SK-N-SH (cell line): ENCODE measurements at regions of chr2 and their contacts with region 1.

Region 1: DNA sequence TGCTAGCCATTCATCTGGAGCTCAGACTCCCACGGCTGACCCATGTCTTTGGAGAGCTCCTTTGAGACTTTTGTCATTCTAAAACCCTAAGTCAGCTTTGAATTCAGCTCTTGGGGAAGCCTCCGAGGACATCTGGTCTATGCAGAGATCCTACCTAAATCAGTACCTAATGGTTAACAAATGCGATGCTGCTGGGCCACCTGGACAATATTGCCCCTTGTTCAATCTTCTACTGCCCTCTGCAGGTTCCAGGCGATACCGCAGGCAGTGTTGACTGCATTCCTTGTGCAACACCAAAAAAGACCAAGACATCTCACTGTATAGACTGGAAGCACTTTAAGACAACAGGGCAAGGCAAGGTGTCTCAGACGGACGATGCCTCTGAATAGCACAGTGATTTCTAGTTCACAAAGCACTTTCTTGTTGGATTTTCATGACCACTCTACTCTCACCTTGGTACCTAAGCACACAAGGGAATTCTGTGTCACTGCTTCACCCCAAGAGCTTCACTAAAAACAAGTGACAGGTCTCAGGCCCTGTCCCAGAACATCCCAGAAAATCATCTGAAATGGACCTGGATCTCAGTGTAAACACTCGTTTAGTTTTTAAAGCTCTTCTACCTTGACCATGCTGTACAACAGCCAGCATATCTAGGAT is 80.9 kb downstream of the XDH start:
- DNase-seq: peak; percentile 82
- H3K4me3 ChIP-seq: no peak overlapping the region; a peak in 1 of 4 replicates
- H3K27ac ChIP-seq: peak overlapping the region in 1 of 2 experiments; percentile 43; a peak in 2 of 4 replicates
- H3K4me1 ChIP-seq: peaks cover 25 to 42% of the 10 kb centered on the region in 2 experiments; a peak in 3 of 4 replicates
- H3K27me3 ChIP-seq: no peaks in the 10 kb centered on the region
- CTCF ChIP-seq: peak; percentile 100
- EP300 ChIP-seq: peak in 1 of 2 experiments; percentile 50; a peak in 2 of 4 replicates
- RAD21 ChIP-seq: peak; percentile 100

Region 2: GRCh38 chr2:30862054-30862651 is 471.5 kb before region 1 on chr2:
- CTCF ChIA-PET with region 1: interaction called, 73 read pairs
- POLR2A ChIA-PET with region 1: no interaction called
- DNase-seq: peak; percentile 83
- H3K4me3 ChIP-seq: peak overlapping the region in 1 of 2 experiments; percentile 43; a peak in 1 of 4 replicates
- H3K27ac ChIP-seq: peak overlapping the region in 1 of 2 experiments; percentile 62; a peak in 2 of 4 replicates
- H3K4me1 ChIP-seq: peaks cover 0 to 30% of the 10 kb centered on the region in 2 experiments; a peak in 2 of 4 replicates
- H3K27me3 ChIP-seq: no peaks in the 10 kb centered on the region
- CTCF ChIP-seq: peak; percentile 65
- EP300 ChIP-seq: no peak
- RAD21 ChIP-seq: peak; percentile 87

Region 3: DNA sequence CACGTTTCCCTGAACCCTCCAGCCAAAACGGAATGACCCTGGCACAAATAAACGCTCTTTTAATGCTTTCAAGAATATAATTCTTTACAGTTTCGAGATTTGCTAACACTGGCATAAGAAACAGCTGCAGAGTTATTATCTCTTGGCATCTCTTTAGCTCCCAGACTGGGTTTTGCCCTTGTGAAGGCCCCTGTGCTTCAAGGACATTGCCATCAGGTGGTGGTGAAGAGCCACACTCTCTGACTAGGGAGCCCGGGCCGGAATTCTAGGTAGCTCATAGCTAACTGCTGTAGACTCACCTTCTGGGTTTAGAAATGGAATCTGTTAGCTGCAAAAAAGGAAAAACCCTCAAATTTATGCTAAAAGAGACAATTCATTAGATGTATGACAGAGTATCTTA is 182.2 kb before region 1 on chr2:
- CTCF ChIA-PET with region 1: interaction called, 28 read pairs
- POLR2A ChIA-PET with region 1: no interaction called
- DNase-seq: peak; percentile 40
- H3K4me3 ChIP-seq: no peak overlapping the region
- H3K27ac ChIP-seq: no peak overlapping the region
- H3K4me1 ChIP-seq: no peaks in the 10 kb centered on the region
- H3K27me3 ChIP-seq: 0 out of 2 replicates have a peak, but pooled peaks cover 5% of the 10 kb centered on the region
- CTCF ChIP-seq: 0 out of 2 replicates have a peak, but pooled peaks have one; percentile 19
- EP300 ChIP-seq: no peak
- RAD21 ChIP-seq: peak; percentile 39

Region 4: DNA sequence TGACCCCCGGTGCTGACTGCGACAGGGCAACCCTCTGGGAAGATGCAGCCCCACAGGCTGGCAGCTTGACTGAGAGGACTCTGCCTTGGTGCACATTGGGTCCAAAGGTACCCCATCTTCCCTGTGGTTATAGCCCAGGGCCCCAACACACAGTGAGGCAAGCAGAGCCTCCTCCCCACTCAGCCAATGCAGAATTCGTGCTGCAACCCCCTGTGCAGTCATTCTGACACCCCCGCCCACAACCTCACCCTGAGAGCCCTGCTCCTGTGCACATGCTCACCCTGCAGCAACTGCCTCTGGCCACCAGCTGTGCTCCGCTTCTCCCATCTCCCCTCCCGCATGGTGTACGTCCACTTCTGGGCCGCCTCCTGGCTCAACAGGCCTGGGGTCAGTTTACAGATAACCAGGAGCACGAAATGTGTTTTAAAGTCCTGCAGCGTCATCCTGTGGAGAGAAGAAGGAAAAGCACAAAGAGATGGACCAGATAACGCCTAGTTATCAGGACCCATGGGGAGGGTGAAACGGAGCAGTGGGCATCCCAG is 140.7 kb before region 1 on chr2:
- CTCF ChIA-PET with region 1: interaction called, 14 read pairs
- POLR2A ChIA-PET with region 1: no interaction called
- DNase-seq: no peak
- H3K4me3 ChIP-seq: no peak overlapping the region
- H3K27ac ChIP-seq: no peak overlapping the region
- H3K4me1 ChIP-seq: no peaks in the 10 kb centered on the region; a peak in 1 of 4 replicates
- H3K27me3 ChIP-seq: peaks cover under 1% of the 10 kb centered on the region; the same call in 1 of the 2 replicates
- CTCF ChIP-seq: no peak; the same call in 1 of the 2 replicates
- EP300 ChIP-seq: no peak
- RAD21 ChIP-seq: no peak

Region 5: GRCh38 chr2:31255911-31256571 is 77.6 kb before region 1 on chr2:
- CTCF ChIA-PET with region 1: interaction called, 12 read pairs
- POLR2A ChIA-PET with region 1: no interaction called
- DNase-seq: no peak
- H3K4me3 ChIP-seq: no peak overlapping the region
- H3K27ac ChIP-seq: no peak overlapping the region
- H3K4me1 ChIP-seq: peaks cover 0 to 4% of the 10 kb centered on the region in 2 experiments; a peak in 1 of 4 replicates
- H3K27me3 ChIP-seq: no peaks in the 10 kb centered on the region
- CTCF ChIP-seq: no peak
- EP300 ChIP-seq: no peak
- RAD21 ChIP-seq: no peak

Region 6: DNA sequence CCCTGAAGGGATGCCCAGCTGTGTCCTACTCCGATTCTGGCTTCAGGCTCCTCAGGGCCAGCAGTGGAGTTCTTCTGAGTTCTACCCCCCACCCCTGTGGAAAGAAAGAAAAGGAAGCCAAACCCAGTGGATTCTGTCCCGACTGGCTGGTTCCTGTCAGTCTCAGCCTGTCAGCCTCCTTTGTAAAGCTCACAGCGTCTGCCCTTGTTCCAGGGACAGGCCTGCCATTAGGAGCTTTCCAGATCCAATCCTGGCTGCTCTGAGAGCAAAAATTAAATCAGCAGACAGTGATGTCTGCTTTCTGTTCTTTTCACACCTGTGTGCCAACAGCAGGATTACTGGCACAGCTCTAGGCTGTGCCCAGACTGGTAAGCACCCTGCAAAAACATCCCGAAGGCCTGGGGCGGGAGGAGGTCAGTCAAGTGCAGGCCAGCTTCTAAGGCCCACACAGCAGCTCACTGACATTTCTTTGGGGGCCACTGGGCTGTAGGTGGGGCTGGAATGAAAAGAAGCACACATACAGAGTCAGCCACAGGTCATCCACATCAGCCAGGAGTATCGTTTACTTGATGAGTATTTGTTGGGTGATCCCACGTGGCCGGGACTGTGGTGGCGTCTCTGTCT is 30.6 kb before region 1 on chr2:
- CTCF ChIA-PET with region 1: interaction called, 53 read pairs
- POLR2A ChIA-PET with region 1: interaction called, 3 read pairs
- DNase-seq: peak; percentile 71
- H3K4me3 ChIP-seq: no peak overlapping the region
- H3K27ac ChIP-seq: peak overlapping the region in 1 of 2 experiments; percentile 97; a peak in 2 of 4 replicates
- H3K4me1 ChIP-seq: peaks cover 2 to 33% of the 10 kb centered on the region in 2 experiments; a peak in 3 of 4 replicates
- H3K27me3 ChIP-seq: no peaks in the 10 kb centered on the region
- CTCF ChIP-seq: no peak
- EP300 ChIP-seq: peak in 1 of 2 experiments; percentile 90; a peak in 2 of 4 replicates
- RAD21 ChIP-seq: peak; percentile 30; the same call in 1 of the 2 replicates

Region 7: GRCh38 chr2:31347750-31348149 is 14.1 kb after region 1 on chr2:
- CTCF ChIA-PET with region 1: interaction called, 40 read pairs
- POLR2A ChIA-PET with region 1: no interaction called
- DNase-seq: no peak
- H3K4me3 ChIP-seq: no peak overlapping the region
- H3K27ac ChIP-seq: no peak overlapping the region
- H3K4me1 ChIP-seq: no peaks in the 10 kb centered on the region; a peak in 1 of 4 replicates
- H3K27me3 ChIP-seq: no peaks in the 10 kb centered on the region
- CTCF ChIP-seq: no peak
- EP300 ChIP-seq: no peak
- RAD21 ChIP-seq: no peak

Region 8: DNA sequence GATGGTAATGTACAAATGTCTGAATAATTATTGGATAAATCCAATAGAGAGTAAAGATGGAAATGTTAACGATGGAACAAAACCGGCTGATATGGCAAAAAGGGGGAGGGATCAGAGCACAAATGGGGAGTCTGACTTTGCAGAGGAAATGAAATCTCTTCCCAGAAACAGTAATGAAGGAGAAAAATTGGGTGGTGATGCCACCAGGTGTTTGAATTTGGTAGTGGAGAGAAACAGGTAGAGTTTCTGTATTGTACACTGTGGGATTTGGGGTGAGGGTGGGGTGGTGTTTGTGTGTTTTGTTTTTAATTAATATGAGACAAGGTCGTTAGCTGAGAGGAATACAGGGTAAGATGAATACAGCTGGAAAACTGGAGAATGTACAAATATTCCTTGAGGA is 101.3 kb after region 1 on chr2:
- CTCF ChIA-PET with region 1: no interaction called
- POLR2A ChIA-PET with region 1: no interaction called
- DNase-seq: peak; percentile 17
- H3K4me3 ChIP-seq: no peak overlapping the region
- H3K27ac ChIP-seq: no peak overlapping the region
- H3K4me1 ChIP-seq: peaks cover 0 to 5% of the 10 kb centered on the region in 2 experiments; a peak in 1 of 4 replicates
- H3K27me3 ChIP-seq: no peaks in the 10 kb centered on the region
- CTCF ChIP-seq: peak; percentile 60
- EP300 ChIP-seq: no peak
- RAD21 ChIP-seq: peak; percentile 59